Right cardiac atrium (tissue), 5 donors: ENCODE measurements at regions of chr12 and their contacts with region 1.

Region 1: GRCh38 chr12:85866986-85867776 is 6.9 kb upstream of the NTS start:
- DNase-seq: no peak
- ATAC-seq: peak; percentile 84
- H3K4me3 ChIP-seq: no peak overlapping the region
- H3K27ac ChIP-seq: no peak overlapping the region
- H3K4me1 ChIP-seq: no peaks in the 10 kb centered on the region
- H3K27me3 ChIP-seq: no peaks in the 10 kb centered on the region

Region 2: DNA sequence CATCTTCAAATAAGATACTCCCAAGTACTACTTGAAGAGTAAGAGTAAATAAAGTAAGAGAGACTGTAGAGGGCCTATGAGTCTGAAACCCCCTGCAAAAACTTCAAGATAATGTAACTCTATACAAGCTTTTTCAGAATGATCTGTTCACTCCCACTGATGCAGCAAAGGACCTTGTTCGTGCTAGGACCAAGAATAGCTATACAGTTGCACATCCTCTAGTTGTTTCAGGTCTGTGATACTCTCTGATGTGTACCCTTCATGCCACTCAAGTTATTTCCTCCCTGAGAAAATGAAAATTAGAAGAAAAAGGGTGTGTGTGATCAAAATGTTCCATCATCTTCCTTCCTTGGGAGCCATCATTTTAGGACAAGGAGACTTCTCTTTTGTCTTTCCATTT is 382.8 kb before region 1 on chr12:
- intact Hi-C with region 1: loop called in 3 of 4 experiments (anchors 5 to 10 kb)
- DNase-seq: no peak
- ATAC-seq: no peak
- H3K4me3 ChIP-seq: no peak overlapping the region
- H3K27ac ChIP-seq: no peak overlapping the region
- H3K4me1 ChIP-seq: no peaks in the 10 kb centered on the region
- H3K27me3 ChIP-seq: no peaks in the 10 kb centered on the region

Region 3: GRCh38 chr12:85575120-85576096 is 291.8 kb before region 1 on chr12:
- intact Hi-C with region 1: loop called (anchors 5 to 10 kb)
- DNase-seq: peak; percentile 29 to 64 (median 37)
- ATAC-seq: peak; percentile 69 to 87
- H3K4me3 ChIP-seq: no peak overlapping the region
- H3K27ac ChIP-seq: no peak overlapping the region
- H3K4me1 ChIP-seq: no peaks in the 10 kb centered on the region
- H3K27me3 ChIP-seq: no peaks in the 10 kb centered on the region

Region 4: DNA sequence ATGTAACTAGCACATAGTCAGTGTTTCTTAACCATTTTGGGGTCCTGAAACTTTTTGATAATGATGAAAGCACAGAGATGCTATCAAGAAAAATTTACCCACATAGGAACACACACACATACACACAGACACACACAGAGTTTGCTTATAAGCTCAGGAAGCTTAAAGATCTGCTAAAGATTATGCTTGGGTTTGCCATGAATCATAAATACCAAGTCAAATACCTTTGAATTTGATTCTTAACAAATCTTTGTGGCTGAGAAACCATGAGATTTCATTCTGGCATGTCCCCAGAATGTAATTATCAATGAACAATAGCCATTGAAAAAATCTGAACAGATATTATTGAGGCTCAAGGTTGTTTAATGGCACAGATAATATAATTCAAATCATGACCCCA is 96.1 kb after region 1 on chr12:
- intact Hi-C with region 1: no loop called
- DNase-seq: no peak
- ATAC-seq: no peak
- H3K4me3 ChIP-seq: no peak overlapping the region
- H3K27ac ChIP-seq: no peak overlapping the region
- H3K4me1 ChIP-seq: no peaks in the 10 kb centered on the region
- H3K27me3 ChIP-seq: no peaks in the 10 kb centered on the region

Region 5: DNA sequence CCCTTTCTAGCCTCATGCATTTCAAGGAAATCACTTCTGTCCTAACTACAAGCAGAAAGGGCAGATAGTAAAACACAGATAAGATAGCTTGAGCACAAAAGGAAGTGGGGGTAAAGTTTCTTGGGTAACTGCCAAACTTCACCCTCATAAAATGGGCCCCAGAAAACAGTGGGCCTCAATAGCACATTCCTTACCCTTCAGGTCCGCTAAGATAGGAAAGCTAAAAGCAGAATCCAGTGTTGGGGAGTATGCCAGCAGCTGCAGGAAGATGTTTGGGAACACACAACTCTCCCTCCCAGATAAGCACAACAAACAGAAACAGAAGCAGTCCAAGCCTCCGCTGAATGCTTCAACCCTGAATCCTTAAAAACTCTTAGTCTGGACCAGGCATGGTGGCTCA is 500.0 kb after region 1 on chr12:
- intact Hi-C with region 1: no loop called
- DNase-seq: no peak
- ATAC-seq: peak; percentile 45 to 54
- H3K4me3 ChIP-seq: no peak overlapping the region
- H3K27ac ChIP-seq: no peak overlapping the region
- H3K4me1 ChIP-seq: no peaks in the 10 kb centered on the region
- H3K27me3 ChIP-seq: no peaks in the 10 kb centered on the region